Gastrocnemius medialis (tissue), 4 donors: ENCODE measurements at regions of chr1 and their contacts with region 1.

Region 1: GRCh38 chr1:1059494-1060280 is 14.4 kb downstream of the RNF223 start:
- DNase-seq: peak; percentile 65 to 82
- ATAC-seq: peak; percentile 88 to 93
- H3K4me3 ChIP-seq: peak overlapping the region; percentile 47 to 83 (median 64)
- H3K27ac ChIP-seq: no peak overlapping the region
- H3K4me1 ChIP-seq: peaks cover 10 to 18% of the 10 kb centered on the region in 2 donors
- H3K27me3 ChIP-seq: peaks cover 48 to 56% (median 51%) of the 10 kb centered on the region in 3 donors
- CTCF ChIP-seq: peak in 1 of 5 experiments; percentile 6
- POLR2A ChIP-seq: peak in 1 of 2 donors; percentile 13

Region 2: GRCh38 chr1:983799-984473 is 75.8 kb before region 1 on chr1:
- in situ Hi-C with region 1: loop called in 2 of 4 experiments (anchors 10 kb)
- intact Hi-C with region 1: loop called (anchors 1 kb)
- DNase-seq: peak in 1 of 2 donors; percentile 60
- ATAC-seq: no peak
- H3K4me3 ChIP-seq: peak overlapping the region in 3 of 4 donors; percentile 37 to 39 (median 37)
- H3K27ac ChIP-seq: peak overlapping the region; percentile 100
- H3K4me1 ChIP-seq: peaks cover 21 to 27% of the 10 kb centered on the region in 2 donors
- H3K27me3 ChIP-seq: no peaks in the 10 kb centered on the region
- CTCF ChIP-seq: peak; percentile 49 to 99 (median 75)
- POLR2A ChIP-seq: no peak

Region 3: GRCh38 chr1:1040004-1040991 is 19.4 kb before region 1 on chr1:
- in situ Hi-C with region 1: no loop called
- intact Hi-C with region 1: loop called (anchors 2 kb)
- DNase-seq: peak; percentile 33 to 64
- ATAC-seq: peak; percentile 76 to 85
- H3K4me3 ChIP-seq: peak overlapping the region; percentile 44 to 60 (median 48)
- H3K27ac ChIP-seq: no peak overlapping the region
- H3K4me1 ChIP-seq: peaks cover 7 to 10% of the 10 kb centered on the region in 2 donors
- H3K27me3 ChIP-seq: peaks cover 26 to 47% (median 36%) of the 10 kb centered on the region in 3 donors
- CTCF ChIP-seq: no peak
- POLR2A ChIP-seq: no peak